ENCODE measurements at regions of chr2 and their contacts with region 1.

Region 1: DNA sequence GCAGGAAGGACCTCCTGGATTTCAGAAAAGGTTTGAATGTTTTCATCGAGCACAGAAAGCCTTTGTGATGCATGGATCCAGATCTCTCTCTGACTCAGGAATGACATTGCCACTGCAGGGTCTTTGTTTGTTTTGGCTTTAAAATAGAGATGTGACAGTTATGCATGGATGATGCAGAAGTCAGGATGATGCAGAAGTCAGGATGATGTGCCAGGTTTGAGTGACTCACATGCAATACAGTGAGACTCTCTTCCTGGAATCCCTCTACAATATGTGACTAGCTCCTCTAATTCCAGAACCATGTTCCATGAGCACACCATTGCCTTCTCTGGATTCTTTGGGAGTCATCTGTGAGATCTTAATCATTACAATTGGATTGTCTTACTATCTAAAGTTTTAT is 177.9 kb upstream of the RAB6C start:
- DNase-seq: no peak

Region 2: DNA sequence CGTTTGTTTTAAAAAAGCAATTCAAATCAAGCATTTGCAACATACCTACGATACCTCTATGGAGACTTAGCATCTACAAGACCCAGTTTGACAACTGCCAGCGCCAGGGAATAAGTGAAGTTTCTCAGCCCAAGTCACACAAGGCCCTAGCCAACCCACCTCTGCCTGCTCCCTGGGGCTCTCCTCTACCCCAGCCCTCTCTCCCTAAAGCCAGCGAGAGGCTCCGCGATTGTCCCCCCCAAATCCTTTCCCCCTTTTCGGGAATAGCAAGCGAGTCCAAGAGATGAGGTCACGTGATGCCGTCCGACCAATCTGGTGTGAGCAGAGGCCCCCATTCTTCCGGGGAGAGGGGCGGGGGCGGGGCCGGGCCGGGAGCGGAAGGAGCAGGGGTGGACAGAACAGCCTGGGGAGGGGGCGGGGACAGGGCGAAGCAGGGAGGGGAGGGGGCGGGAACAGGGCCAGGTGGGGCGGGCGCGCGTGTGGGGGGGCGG is 75.8 kb after region 1 on chr2:
- in situ Hi-C with region 1: loop called (anchors 10 kb)
- DNase-seq: peak; percentile 95

Measured in G401 (cell line).